ENCODE measurements at regions of chr11 and their contacts with region 1.

Region 1: DNA sequence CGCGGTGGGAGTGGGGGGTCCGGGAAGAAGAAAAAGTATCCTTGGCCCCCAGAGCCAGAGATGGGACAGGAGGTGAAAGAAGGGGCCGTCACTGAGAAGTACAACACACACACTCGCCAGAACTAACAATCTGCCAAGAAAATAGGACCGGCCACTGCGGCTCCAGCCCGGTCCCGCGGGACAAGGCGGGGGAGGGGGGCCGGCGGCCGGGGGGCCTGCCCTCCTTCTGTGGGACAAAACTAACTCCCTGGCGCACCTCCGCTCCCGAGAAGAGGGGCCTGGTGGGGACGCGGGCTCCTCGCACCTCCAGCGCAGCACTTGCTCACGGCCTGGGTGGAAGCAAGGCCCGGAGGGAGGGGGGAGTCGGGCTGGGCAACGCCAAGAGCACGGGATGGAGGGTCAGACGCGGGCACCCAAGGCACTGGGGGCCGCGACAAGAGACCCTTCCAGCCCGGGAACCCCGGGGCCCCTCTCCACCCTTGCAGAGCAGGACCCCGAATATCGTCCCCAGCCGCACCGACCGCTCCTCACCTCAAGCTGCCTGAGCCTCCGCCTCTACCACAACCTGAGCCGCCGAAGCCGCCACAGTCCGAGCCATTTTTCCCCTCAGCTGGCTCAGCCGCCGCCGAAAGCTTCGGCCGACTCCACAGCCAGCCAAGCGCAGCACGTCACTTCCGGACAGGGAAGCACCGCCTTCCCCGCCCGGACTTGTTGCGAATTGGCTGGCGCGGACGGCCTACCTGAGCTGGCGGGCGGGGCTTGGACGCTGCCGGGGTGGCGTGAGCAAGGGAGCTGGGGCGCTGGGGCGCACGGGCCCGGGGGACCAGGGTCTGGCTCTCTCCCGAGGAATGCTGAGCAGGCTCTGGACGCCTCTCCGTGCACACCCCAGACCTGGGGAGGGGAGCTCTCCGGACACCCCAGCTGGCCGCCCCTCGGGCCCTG is at the start of gene PIK3C2A:
- DNase-seq: peak; percentile 99
- H3K4me3 Mint-ChIP-seq: peak within 1 kb of the TSS; percentile 97
- H3K27ac Mint-ChIP-seq: peak within 1 kb of the TSS; percentile 96
- H3K4me1 Mint-ChIP-seq: peaks cover 26% of the 10 kb centered on the region
- H3K27me3 Mint-ChIP-seq: no peaks in the 10 kb centered on the region
- total RNA-seq, gene PIK3C2A: 30.3 and 35.3 TPM in 2 replicates

Region 2: GRCh38 chr11:16738193-16738946 is 469.2 kb before region 1 on chr11 and contains the start of gene C11orf58:
- intact Hi-C with region 1: loop called (anchors 5 kb)
- DNase-seq: peak; percentile 98
- H3K4me3 Mint-ChIP-seq: no peak within 1 kb of the TSS
- H3K27ac Mint-ChIP-seq: peak within 1 kb of the TSS; percentile 77
- H3K4me1 Mint-ChIP-seq: peaks cover 16% of the 10 kb centered on the region
- H3K27me3 Mint-ChIP-seq: peaks cover 4% of the 10 kb centered on the region
- total RNA-seq, gene C11orf58: 142 and 149 TPM in 2 replicates

Region 3: GRCh38 chr11:17145972-17146371 is 61.6 kb before region 1 on chr11:
- intact Hi-C with region 1: loop called (anchors 5 kb)
- DNase-seq: no peak
- H3K4me3 Mint-ChIP-seq: no peak overlapping the region
- H3K27ac Mint-ChIP-seq: peak overlapping the region; percentile 53
- H3K4me1 Mint-ChIP-seq: peaks cover 13% of the 10 kb centered on the region
- H3K27me3 Mint-ChIP-seq: no peaks in the 10 kb centered on the region

Region 4: DNA sequence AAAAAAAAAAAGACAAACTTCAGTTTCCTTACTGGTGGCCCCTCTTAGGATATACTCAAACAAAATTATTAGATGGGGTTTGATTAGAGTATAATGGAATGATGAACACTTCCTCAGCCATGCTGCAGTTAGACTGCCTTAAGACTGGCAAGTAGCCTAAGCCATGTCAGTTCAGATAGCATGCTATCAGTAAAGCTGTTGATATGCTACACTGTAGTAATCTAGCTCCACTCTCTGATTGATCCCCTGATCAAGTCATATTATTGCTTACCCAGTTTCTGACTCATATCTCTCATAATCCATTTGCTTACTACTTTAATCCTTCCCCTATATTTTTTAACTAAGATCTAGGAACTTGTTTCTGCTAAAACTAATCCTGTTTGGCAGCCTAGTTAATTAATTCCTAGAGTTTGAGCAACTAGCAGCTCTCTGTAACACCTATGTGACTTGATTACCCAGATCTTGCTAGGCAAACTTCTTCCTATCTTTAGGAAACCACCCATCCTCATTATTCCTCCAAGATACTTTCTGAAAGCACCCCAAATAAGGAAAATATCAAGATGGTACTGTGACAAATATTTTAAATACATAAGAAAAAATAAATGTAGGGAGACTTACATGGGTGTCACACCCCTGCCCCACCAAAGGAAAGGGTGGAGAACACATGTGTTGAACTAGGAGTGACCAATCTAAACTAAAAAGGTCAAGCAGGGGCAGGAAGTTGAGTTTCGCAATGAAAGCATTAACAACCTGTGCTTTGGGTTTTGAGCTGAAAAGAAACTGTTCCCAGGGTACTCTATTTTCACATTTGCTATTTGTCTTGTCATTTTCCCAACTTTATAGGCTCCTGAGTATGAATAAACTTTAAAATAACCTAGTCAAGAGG is 43.0 kb before region 1 on chr11:
- intact Hi-C with region 1: loop called (anchors 5 kb)
- DNase-seq: no peak
- H3K4me3 Mint-ChIP-seq: no peak overlapping the region
- H3K27ac Mint-ChIP-seq: no peak overlapping the region
- H3K4me1 Mint-ChIP-seq: peaks cover 29% of the 10 kb centered on the region
- H3K27me3 Mint-ChIP-seq: no peaks in the 10 kb centered on the region

Region 5: DNA sequence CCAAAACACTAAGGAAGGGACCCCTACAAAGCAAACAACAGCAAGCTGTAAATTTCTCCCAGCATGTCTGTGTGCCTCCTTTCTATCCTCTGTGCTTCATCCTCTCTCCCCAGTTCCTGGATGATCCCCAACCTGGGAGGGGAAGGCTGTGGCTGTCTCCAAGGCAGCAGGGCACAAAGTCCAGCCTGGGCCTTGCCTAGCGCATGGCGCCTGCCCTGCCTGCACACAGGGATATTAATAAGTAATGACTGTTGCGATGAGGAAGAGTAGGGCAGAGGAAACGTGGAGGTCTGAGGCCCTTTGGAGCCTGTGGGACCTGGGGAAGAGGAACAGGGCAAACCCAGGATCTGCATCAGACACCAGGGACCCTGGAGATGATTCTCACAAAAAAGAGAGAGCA is 334.7 kb after region 1 on chr11:
- intact Hi-C with region 1: no loop called
- DNase-seq: no peak
- H3K4me3 Mint-ChIP-seq: no peak overlapping the region
- H3K27ac Mint-ChIP-seq: no peak overlapping the region
- H3K4me1 Mint-ChIP-seq: peaks cover 3% of the 10 kb centered on the region
- H3K27me3 Mint-ChIP-seq: peaks cover 47% of the 10 kb centered on the region